ENCODE measurements at regions of chr5 and their contacts with region 1.

Region 1: DNA sequence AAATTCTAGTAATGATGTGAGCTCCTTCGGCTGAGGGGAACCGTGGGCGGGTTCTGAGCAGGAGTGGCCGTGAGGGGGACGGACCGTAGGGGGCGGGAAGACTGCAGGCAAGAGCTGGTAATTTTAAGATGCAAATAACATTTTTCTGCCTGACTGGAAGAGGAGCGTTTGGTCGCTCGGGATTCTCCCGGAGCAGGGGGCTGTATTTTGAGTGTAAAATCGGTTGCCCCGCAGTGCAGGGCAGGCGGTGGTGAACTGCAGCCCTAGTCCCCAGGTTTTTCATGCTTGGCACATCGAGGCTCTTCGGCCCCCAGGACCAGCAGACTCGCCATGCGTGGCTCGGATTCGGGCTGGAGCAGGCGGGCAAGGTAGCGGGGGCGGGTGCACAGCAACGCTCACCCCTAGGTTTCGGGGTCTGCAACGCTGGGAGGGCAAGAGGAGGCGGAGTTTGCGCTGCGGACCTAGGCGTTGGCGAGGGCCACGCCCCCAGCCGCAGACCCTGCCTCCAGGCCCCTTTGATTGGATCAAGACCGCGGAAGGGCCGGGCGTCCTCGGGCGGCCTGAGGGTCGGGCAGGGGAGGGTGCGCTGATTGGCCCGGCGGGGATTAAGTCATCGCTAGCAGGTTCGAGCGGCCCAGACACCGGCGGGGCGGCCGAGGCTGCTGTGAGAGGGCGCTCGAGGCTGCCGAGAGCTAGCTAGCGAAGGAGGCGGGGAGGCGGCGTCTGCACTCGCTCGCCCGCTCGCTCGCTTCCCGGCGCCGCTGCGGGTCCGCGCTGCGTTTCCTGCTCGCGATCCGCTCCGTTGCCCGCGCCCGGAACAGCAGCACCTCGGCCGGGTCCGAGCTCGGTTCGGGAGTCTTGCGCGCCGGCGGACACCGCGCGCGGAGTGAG is at the start of gene ARHGAP26:
- DNase-seq: peak; percentile 87 to 97 (median 92)
- ATAC-seq: peak; percentile 85
- H3K4me3 ChIP-seq: peak within 1 kb of the TSS; percentile 96 to 98
- H3K4me3 Mint-ChIP-seq: peak within 1 kb of the TSS; percentile 95
- H3K27ac ChIP-seq: peak within 1 kb of the TSS; percentile 74 to 78
- H3K27ac Mint-ChIP-seq: peak within 1 kb of the TSS; percentile 93
- H3K4me1 ChIP-seq: peaks cover 27% of the 10 kb centered on the region
- H3K4me1 Mint-ChIP-seq: peaks cover 45% of the 10 kb centered on the region
- H3K27me3 ChIP-seq: no peaks in the 10 kb centered on the region
- H3K27me3 Mint-ChIP-seq: no peaks in the 10 kb centered on the region
- CTCF ChIP-seq: no peak
- total RNA-seq, gene ARHGAP26: 46.0 to 46.6 TPM

Region 2: DNA sequence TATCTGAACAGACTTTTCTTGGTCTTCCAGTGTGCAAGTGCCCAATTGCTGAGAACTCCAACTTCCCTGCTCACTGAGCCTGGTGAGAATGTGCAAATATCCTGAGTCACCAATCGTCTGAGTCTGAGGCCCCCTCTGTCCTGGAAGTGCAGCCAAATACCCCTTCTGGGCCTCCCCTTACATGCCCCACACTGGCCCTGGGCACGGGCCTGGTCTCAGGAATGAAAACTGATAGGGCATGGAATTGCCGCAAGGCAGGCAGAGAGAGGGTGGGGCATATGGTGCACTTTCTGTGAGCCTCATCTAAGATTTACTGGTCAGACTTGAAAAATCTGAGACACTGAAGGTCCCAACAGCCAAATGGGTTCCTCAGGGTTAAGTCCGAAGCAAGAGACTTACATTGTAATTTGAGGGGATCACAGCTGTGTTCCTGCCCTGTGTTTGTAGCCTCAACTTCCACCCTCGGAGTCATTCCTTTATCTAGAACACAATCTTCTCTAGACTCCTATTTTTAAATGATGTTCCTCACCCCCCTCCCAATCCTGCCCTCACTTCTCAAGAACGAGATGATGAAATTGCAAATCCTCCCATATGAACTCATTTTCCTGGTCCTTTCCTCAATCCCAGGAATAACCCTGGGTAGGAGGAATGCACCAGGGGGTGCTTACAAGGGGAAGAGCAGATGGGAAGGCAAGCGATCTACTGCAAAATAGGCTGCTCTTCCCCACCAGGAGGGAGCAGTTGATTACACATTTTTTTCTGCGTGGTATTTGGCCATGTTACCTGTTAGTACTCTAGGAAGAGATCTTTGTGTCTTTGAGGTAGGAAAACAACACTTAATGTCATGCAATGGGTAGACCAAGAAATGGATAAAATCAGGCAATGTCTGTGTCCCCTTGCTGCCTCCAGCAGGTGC is 34.4 kb before region 1 on chr5:
- CTCF ChIA-PET with region 1: no interaction called
- POLR2A ChIA-PET with region 1: no interaction called
- intact Hi-C with region 1: no loop called
- DNase-seq: no peak
- ATAC-seq: no peak
- H3K4me3 ChIP-seq: no peak overlapping the region
- H3K4me3 Mint-ChIP-seq: no peak overlapping the region
- H3K27ac ChIP-seq: no peak overlapping the region
- H3K27ac Mint-ChIP-seq: no peak overlapping the region
- H3K4me1 ChIP-seq: peaks cover 23% of the 10 kb centered on the region
- H3K4me1 Mint-ChIP-seq: peaks cover 35% of the 10 kb centered on the region
- H3K27me3 ChIP-seq: no peaks in the 10 kb centered on the region
- H3K27me3 Mint-ChIP-seq: no peaks in the 10 kb centered on the region
- CTCF ChIP-seq: no peak

Region 3: GRCh38 chr5:142783601-142784341 is 13.8 kb after region 1 on chr5:
- CTCF ChIA-PET with region 1: interaction called, 34 read pairs
- POLR2A ChIA-PET with region 1: interaction called, 47 read pairs
- intact Hi-C with region 1: loop called (anchors 1 to 2 kb)
- DNase-seq: peak in 7 of 9 experiments; percentile 16 to 80 (median 52)
- ATAC-seq: peak; percentile 60
- H3K4me3 ChIP-seq: peak overlapping the region in 1 of 2 experiments; percentile 47
- H3K4me3 Mint-ChIP-seq: peak overlapping the region; percentile 77
- H3K27ac ChIP-seq: peak overlapping the region; percentile 16 to 72
- H3K27ac Mint-ChIP-seq: peak overlapping the region; percentile 77
- H3K4me1 ChIP-seq: peaks cover 59% of the 10 kb centered on the region
- H3K4me1 Mint-ChIP-seq: peaks cover 79% of the 10 kb centered on the region
- H3K27me3 ChIP-seq: no peaks in the 10 kb centered on the region
- H3K27me3 Mint-ChIP-seq: no peaks in the 10 kb centered on the region
- CTCF ChIP-seq: no peak

Region 4: DNA sequence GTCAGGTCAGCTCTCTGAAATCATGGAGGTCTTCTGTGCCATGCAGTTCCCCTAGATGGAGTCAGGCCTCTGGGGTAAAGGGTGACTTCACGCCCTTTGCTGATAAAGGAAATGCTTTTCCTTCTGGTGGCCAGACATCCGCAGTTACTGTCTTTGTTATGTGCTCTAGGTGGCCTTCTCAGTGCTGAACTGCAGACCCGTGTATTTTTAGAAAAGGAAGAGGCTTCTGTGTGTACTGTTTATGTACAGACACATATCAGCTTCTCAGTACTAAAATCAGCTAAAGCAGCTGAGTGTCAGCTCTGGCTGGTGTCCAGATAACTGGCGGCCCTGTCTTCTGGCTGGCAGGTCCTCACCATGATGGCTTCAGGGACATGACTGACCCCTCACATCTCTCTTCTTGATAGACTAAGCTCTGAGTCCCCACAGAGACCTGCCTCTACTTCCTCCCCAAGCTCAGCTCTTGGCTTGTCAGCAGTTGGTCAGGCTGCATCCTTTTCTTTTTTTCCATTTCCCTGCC is 75.5 kb after region 1 on chr5:
- CTCF ChIA-PET with region 1: interaction called, 12 read pairs
- POLR2A ChIA-PET with region 1: interaction called, 9 read pairs
- intact Hi-C with region 1: no loop called
- DNase-seq: peak in 4 of 9 experiments; percentile 17 to 60 (median 50)
- ATAC-seq: peak; percentile 65
- H3K4me3 ChIP-seq: no peak overlapping the region
- H3K4me3 Mint-ChIP-seq: peak overlapping the region; percentile 57
- H3K27ac ChIP-seq: peak overlapping the region in 1 of 2 experiments; percentile 55
- H3K27ac Mint-ChIP-seq: peak overlapping the region; percentile 92
- H3K4me1 ChIP-seq: peaks cover 24% of the 10 kb centered on the region
- H3K4me1 Mint-ChIP-seq: peaks cover 90% of the 10 kb centered on the region
- H3K27me3 ChIP-seq: no peaks in the 10 kb centered on the region
- H3K27me3 Mint-ChIP-seq: no peaks in the 10 kb centered on the region
- CTCF ChIP-seq: no peak

Region 5: DNA sequence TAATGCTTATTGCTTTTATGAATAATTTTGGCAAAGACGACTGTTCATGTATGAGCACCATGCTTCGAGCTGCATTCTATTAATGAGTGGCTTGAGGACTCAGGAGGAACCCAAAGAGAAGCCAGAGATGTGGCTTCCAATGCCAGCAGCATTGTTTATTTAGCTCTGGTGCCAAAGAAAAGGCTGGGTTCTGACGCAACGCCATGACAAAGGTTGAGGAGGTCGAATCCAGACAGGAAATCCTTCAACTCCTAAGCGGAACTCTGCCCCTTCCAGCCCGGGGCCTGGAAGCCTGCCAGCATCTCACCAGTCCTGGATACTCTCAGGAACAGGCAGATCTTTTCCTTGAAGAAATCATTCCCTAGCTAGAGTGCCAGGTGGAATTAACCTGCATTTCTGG is 104.6 kb after region 1 on chr5:
- CTCF ChIA-PET with region 1: interaction called, 51 read pairs
- POLR2A ChIA-PET with region 1: interaction called, 7 read pairs
- intact Hi-C with region 1: no loop called
- DNase-seq: no peak
- ATAC-seq: no peak
- H3K4me3 ChIP-seq: no peak overlapping the region
- H3K4me3 Mint-ChIP-seq: no peak overlapping the region
- H3K27ac ChIP-seq: no peak overlapping the region
- H3K27ac Mint-ChIP-seq: no peak overlapping the region
- H3K4me1 ChIP-seq: no peaks in the 10 kb centered on the region
- H3K4me1 Mint-ChIP-seq: peaks cover 9% of the 10 kb centered on the region
- H3K27me3 ChIP-seq: no peaks in the 10 kb centered on the region
- H3K27me3 Mint-ChIP-seq: no peaks in the 10 kb centered on the region
- CTCF ChIP-seq: no peak

Region 6: GRCh38 chr5:144170276-144171024 is 1400.5 kb after region 1 on chr5 and contains the starts of genes KCTD16 and YIPF5:
- CTCF ChIA-PET with region 1: no interaction called
- POLR2A ChIA-PET with region 1: no interaction called
- intact Hi-C with region 1: loop called in 1 of 2 experiments (anchors 5 kb)
- DNase-seq: peak; percentile 94 to 99 (median 96)
- ATAC-seq: peak; percentile 96
- H3K4me3 ChIP-seq: peak within 1 kb of the TSS; percentile 81 to 94
- H3K4me3 Mint-ChIP-seq: peak within 1 kb of the TSS; percentile 89
- H3K27ac ChIP-seq: peak within 1 kb of the TSS; percentile 92 to 94
- H3K27ac Mint-ChIP-seq: peak within 1 kb of the TSS; percentile 96
- H3K4me1 ChIP-seq: peaks cover 21% of the 10 kb centered on the region
- H3K4me1 Mint-ChIP-seq: peaks cover 51% of the 10 kb centered on the region
- H3K27me3 ChIP-seq: no peaks in the 10 kb centered on the region
- H3K27me3 Mint-ChIP-seq: no peaks in the 10 kb centered on the region
- CTCF ChIP-seq: no peak
- total RNA-seq, gene KCTD16: not detected
- total RNA-seq, gene YIPF5: 62.8 to 64.6 TPM